ENCODE measurements at regions of chr17 and their contacts with region 1.

Region 1: DNA sequence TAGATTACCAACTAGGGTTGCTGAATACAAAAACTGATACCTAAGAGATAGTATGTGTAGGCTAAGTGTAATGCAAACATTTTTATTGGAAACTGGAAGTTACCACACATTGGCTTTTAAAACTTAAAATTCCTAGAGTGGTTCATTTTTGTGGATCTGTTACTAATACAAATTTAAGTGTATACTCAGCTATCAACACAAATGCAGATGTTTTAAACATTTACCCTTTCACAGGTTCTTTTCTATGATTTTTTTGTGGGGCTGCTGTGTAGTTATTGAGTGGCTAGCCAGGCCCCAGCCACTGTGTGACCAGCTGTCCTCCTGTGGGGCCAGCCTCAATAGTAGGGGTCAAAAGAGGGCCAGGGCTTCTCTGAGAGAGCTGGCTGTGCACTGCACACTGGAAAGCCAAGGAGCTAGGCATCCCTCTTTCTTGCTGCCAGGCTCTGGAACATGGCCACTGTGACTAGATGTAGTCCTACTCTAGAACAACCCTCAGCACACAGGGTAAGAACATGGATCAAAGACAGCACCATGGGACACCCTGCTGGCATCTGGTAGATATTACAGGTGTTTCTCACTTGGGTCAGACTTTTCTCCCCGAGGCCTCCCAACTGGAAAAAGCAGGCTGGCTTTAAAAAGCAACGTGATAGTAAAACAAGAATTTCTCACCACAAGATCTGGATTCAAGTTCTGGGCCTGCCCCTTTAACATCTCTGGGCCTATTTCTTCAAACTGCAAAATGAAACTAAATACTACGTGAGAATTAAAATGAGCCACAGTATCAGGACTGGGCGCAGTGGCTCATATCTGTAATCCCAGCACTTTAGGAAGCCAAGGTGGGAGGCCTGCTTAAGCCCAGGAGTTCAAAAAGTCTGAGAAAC is 7.3 kb upstream of the VEZF1 start:
- DNase-seq: peak; percentile 77
- ATAC-seq: peak; percentile 82
- H3K4me3 Mint-ChIP-seq: no peak overlapping the region
- H3K27ac Mint-ChIP-seq: peak overlapping the region; percentile 21
- H3K4me1 Mint-ChIP-seq: peaks cover 68% of the 10 kb centered on the region
- H3K27me3 Mint-ChIP-seq: no peaks in the 10 kb centered on the region

Region 2: GRCh38 chr17:57861000-57861789 is 134.1 kb before region 1 on chr17:
- CTCF ChIA-PET with region 1: interaction called, 249 read pairs
- POLR2A ChIA-PET with region 1: interaction called, 3 read pairs
- intact Hi-C with region 1: loop called (anchors 1 kb)
- DNase-seq: peak; percentile 55
- ATAC-seq: peak; percentile 73
- H3K4me3 Mint-ChIP-seq: peak overlapping the region; percentile 60
- H3K27ac Mint-ChIP-seq: no peak overlapping the region
- H3K4me1 Mint-ChIP-seq: peaks cover 9% of the 10 kb centered on the region
- H3K27me3 Mint-ChIP-seq: peaks cover 13% of the 10 kb centered on the region

Region 3: GRCh38 chr17:57892146-57892828 is 103.0 kb before region 1 on chr17:
- CTCF ChIA-PET with region 1: interaction called, 65 read pairs
- POLR2A ChIA-PET with region 1: no interaction called
- intact Hi-C with region 1: loop called (anchors 1 to 2 kb)
- DNase-seq: peak; percentile 89
- ATAC-seq: peak; percentile 98
- H3K4me3 Mint-ChIP-seq: no peak overlapping the region
- H3K27ac Mint-ChIP-seq: no peak overlapping the region
- H3K4me1 Mint-ChIP-seq: peaks cover 3% of the 10 kb centered on the region
- H3K27me3 Mint-ChIP-seq: no peaks in the 10 kb centered on the region

Region 4: DNA sequence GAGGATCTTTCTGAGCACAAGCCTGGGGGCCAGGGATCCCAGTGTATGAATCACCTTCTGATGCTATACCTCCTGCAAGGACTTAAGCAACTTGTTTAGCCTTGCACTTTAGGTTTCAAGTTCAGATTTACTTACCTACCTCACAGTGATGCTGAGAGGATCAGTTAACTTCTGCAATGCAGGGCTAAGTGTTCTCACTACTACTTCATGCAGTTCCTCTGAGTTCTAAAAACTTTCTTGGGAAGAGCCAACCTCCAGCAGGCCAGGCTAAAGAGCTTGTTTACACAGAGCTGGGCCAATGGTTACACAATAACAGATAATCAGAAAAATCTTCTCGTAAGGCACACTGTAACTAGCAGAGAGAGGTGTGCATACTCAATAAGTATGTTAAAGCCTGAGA is 20.3 kb before region 1 on chr17:
- CTCF ChIA-PET with region 1: interaction called, 14 read pairs
- POLR2A ChIA-PET with region 1: no interaction called
- intact Hi-C with region 1: no loop called
- DNase-seq: no peak
- ATAC-seq: no peak
- H3K4me3 Mint-ChIP-seq: no peak overlapping the region
- H3K27ac Mint-ChIP-seq: no peak overlapping the region
- H3K4me1 Mint-ChIP-seq: peaks cover 3% of the 10 kb centered on the region
- H3K27me3 Mint-ChIP-seq: no peaks in the 10 kb centered on the region

Region 5: GRCh38 chr17:57982452-57983170 is 12.7 kb before region 1 on chr17:
- CTCF ChIA-PET with region 1: interaction called, 93 read pairs
- POLR2A ChIA-PET with region 1: interaction called, 6 read pairs
- intact Hi-C with region 1: loop called in 1 of 2 experiments (anchors 1 kb)
- DNase-seq: no peak
- ATAC-seq: no peak
- H3K4me3 Mint-ChIP-seq: no peak overlapping the region
- H3K27ac Mint-ChIP-seq: peak overlapping the region; percentile 21
- H3K4me1 Mint-ChIP-seq: peaks cover 56% of the 10 kb centered on the region
- H3K27me3 Mint-ChIP-seq: no peaks in the 10 kb centered on the region

Region 6: DNA sequence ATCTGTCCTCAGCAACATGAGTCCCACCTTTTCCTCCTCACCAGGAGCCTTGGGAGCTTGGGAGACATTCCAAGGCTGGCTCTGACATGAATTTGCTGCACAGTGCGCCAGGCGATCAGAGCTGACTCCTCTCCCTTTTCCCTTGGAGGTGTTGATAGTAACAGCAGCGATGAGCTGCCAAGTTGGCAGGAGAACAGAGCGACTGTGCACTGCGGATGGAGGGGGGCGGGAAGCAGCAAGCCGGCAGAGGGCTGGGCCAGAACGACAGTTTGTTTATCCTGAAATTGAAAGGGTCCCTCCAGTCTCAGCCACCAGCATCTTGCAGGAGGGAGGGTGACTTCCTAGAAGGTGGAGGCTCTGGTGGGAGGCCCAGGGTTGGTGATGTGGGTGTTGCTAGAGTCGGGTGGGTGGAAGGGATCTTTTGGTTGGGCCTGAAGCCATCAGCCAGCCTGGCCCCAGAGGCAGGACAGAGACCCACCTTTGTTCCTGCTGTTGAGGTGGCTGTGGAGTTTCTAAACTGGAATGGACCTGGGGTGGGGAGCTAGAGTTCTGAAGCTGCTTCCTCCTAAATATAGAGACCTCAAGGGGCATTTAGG is 65.4 kb after region 1 on chr17:
- CTCF ChIA-PET with region 1: no interaction called
- POLR2A ChIA-PET with region 1: no interaction called
- intact Hi-C with region 1: no loop called
- DNase-seq: no peak
- ATAC-seq: no peak
- H3K4me3 Mint-ChIP-seq: no peak overlapping the region
- H3K27ac Mint-ChIP-seq: no peak overlapping the region
- H3K4me1 Mint-ChIP-seq: no peaks in the 10 kb centered on the region
- H3K27me3 Mint-ChIP-seq: peaks cover 2% of the 10 kb centered on the region

Region 7: GRCh38 chr17:58112970-58113631 is 117.8 kb after region 1 on chr17:
- CTCF ChIA-PET with region 1: interaction called, 20 read pairs
- POLR2A ChIA-PET with region 1: no interaction called
- intact Hi-C with region 1: no loop called
- DNase-seq: peak; percentile 91
- ATAC-seq: peak; percentile 96
- H3K4me3 Mint-ChIP-seq: no peak overlapping the region
- H3K27ac Mint-ChIP-seq: no peak overlapping the region
- H3K4me1 Mint-ChIP-seq: no peaks in the 10 kb centered on the region
- H3K27me3 Mint-ChIP-seq: peaks cover 5% of the 10 kb centered on the region

Region 8: DNA sequence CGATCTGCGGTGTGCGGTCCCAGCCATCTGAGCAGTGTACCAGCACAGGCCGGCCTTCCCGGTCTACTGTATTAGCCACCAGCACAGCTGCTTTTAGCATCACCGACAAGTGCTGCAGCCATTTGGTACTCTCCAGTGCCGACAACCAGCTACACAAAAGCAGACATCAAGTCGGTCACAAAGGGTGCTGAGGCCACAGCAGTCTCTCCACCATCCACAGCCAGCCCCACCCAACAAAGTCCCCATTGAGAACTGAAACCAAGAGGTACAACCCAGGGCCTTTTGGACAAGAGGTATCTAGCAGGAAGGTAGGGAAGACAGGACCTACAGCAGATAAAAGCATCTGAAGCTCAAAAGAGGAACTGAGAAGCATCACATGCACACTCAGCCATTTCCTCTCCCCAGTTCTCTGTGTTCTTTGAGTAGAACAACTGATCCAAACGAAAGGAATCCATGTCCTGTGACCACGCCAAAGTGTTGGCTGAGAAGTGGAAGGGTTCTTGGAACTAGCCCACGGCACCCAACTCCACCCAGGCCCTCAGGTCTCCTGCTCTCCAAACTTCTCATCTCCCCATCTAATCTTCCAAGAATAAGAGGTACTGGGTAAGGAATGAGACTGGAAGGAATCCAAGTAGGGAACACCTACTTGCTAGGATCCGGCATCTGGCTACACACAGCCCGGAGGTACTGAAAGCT is 509.7 kb after region 1 on chr17:
- CTCF ChIA-PET with region 1: no interaction called
- POLR2A ChIA-PET with region 1: no interaction called
- intact Hi-C with region 1: no loop called
- DNase-seq: no peak
- ATAC-seq: no peak
- H3K4me3 Mint-ChIP-seq: no peak overlapping the region
- H3K27ac Mint-ChIP-seq: no peak overlapping the region
- H3K4me1 Mint-ChIP-seq: no peaks in the 10 kb centered on the region
- H3K27me3 Mint-ChIP-seq: no peaks in the 10 kb centered on the region